Adrenal gland (tissue), 19 donors: ENCODE measurements at regions of chr9 and their contacts with region 1.

Region 1: DNA sequence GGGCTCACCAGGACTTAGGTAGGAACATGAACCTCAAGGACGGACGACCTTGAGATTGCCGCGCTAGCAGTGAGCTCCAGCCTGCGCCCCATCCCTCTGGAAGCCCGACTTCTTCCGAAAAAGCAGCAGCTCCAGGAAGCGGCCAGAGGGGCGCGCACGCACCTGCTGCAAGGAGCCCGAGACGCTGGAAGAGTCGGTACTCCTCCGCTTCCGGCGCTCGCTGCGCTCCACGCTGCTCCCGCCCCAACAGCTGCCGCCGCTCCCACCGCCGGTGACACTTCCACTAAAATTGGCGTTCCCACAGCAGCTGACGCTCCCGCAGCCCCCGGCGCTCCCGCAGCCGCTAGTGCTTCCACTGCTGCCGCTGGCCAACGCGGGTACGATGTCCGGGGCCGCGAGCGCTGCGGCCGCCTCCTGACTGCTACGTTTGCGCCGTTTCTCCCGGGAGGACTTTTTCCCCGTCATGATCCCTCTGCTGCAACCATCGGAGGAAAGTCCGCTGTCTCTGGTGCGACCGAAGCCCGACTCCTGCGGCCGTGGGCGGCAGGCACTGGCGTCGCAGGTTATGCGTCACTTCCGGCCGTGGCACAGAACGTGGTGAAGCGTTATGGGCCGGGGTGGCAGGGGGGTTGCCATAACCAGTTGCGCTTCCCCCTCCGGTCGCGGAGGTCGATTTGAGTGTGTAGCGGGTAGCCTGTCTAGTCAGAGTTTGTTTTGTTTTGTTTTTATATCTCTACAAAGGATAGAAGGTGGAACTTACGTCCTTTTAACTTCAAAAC is at the start of gene CAAP1:
- DNase-seq: peak; percentile 93 to 98 (median 96)
- H3K4me3 ChIP-seq: peak within 1 kb of the TSS; percentile 17 to 85 (median 78)
- H3K27ac ChIP-seq: peak within 1 kb of the TSS; percentile 88 to 98 (median 98)
- H3K4me1 ChIP-seq: peaks cover 17 to 42% of the 10 kb centered on the region in 2 donors
- H3K27me3 ChIP-seq: no peaks in the 10 kb centered on the region
- CTCF ChIP-seq: peak; percentile 14 to 53 (median 46)
- POLR2A ChIP-seq: peak; percentile 61 to 91
- total RNA-seq, gene CAAP1: 19.2 to 62.4 (median 34.8) TPM

Region 2: DNA sequence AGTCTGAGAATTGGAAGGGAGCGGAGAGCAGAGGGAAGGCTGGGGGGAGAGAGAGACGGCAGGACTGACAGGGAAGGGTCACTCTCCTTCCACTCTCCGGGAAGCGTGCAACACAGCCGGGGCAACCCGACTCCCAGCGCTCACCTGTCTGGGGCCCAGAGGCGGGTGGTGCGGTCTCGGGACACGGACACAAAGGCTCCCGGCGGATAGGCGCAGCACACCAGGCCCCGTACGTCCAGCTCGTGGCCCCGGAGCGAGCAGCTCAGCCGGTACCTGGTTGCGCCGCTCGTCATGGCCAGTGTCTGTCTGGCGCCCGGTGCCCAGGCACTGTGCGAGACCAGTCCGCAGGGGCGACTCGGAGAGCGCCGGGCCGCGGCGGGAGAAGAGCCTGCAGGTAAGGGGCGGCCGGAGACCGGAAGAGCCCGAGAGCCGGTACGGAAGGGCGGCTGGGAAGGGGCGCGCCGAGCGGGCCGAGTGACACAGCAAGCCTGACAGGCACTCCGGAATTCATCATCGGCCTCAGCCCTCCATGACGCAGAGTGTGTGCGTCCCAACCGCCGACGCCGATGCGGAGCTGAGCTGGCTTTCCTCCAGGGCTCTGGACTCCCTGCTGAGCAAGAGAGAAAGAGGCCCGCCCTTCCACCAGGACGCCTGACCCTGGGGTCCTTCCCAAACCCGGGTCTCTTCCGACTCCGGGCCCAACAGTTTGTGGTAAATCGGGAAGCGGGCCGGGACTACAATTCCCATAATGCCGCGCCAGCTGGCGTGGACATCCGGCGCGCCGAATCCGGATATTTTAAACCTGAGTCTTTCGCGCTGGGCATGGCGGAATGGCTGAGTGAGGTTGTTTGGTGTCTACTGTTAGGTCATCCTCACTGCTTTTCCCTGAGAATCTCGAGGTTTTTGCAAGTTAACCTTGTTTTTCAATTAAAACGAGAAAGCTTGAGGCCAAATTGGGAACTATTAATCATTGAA is 54.6 kb after region 1 on chr9 and contains the start of gene PLAA:
- intact Hi-C with region 1: loop called in 1 of 2 experiments (anchors 10 kb)
- DNase-seq: peak; percentile 90 to 96 (median 93)
- H3K4me3 ChIP-seq: peak within 1 kb of the TSS; percentile 54 to 88 (median 72)
- H3K27ac ChIP-seq: peak within 1 kb of the TSS; percentile 94 to 99 (median 98)
- H3K4me1 ChIP-seq: peaks cover 28 to 32% of the 10 kb centered on the region in 2 donors
- H3K27me3 ChIP-seq: no peaks in the 10 kb centered on the region
- CTCF ChIP-seq: peak in 4 of 6 experiments; percentile 12 to 40 (median 25)
- POLR2A ChIP-seq: peak; percentile 71 to 81
- total RNA-seq, gene PLAA: 30.9 to 89.8 (median 39.1) TPM

Region 3: GRCh38 chr9:26975693-26976059 is 83.2 kb after region 1 on chr9:
- intact Hi-C with region 1: loop called in 1 of 2 experiments (anchors 10 kb)
- DNase-seq: peak; percentile 25 to 74 (median 43)
- H3K4me3 ChIP-seq: no peak overlapping the region
- H3K27ac ChIP-seq: no peak overlapping the region
- H3K4me1 ChIP-seq: no peaks in the 10 kb centered on the region
- H3K27me3 ChIP-seq: no peaks in the 10 kb centered on the region
- CTCF ChIP-seq: peak; percentile 32 to 75 (median 66)
- POLR2A ChIP-seq: no peak

Region 4: DNA sequence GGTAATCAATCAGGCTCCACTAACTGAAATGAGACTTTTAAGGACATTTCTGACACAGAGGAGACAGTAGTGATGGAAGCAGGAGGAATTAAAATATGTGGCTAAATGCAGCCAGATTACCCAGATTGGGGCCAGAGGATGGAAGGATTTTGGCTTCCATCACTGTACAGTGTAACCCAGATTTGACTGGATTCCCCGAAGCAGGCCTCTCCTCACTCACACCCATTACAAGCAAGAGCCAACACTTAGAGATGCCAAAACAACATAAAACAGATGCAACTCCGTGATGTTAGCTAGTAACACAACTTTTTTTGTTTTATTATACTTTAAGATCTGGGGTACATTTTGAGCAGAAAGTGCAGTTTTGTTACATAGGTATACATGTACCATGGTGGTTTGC is 234.2 kb after region 1 on chr9:
- intact Hi-C with region 1: no loop called
- DNase-seq: no peak
- H3K4me3 ChIP-seq: no peak overlapping the region
- H3K27ac ChIP-seq: no peak overlapping the region
- H3K4me1 ChIP-seq: peaks cover 6 to 7% of the 10 kb centered on the region in 2 donors
- H3K27me3 ChIP-seq: peaks cover 9% of the 10 kb centered on the region
- CTCF ChIP-seq: no peak
- POLR2A ChIP-seq: no peak

Region 5: DNA sequence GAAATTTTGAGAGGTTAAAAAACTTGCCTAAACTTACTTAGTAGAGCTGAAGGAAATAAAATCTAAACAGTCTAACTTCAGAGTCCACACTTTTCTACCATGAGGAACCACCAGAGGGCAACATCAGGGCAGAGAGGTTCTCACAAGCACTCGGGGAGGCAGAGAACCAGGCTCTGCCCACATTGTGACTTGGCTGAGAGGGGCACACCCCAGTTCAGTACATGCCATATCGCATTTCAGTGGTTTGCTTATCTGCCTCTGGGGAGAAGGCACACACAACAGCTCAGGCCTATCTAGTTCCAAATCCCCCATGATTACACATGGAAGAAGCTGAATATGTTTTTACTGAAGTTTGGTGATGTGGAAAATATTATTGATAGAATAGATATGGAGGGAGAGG is 355.3 kb after region 1 on chr9:
- intact Hi-C with region 1: no loop called
- DNase-seq: peak; percentile 17 to 53 (median 27)
- H3K4me3 ChIP-seq: no peak overlapping the region
- H3K27ac ChIP-seq: no peak overlapping the region
- H3K4me1 ChIP-seq: no peaks in the 10 kb centered on the region
- H3K27me3 ChIP-seq: no peaks in the 10 kb centered on the region
- CTCF ChIP-seq: peak; percentile 29 to 59 (median 40)
- POLR2A ChIP-seq: no peak